Heart left ventricle (tissue), 16 donors: ENCODE measurements at regions of chr6 and their contacts with region 1.

Region 1: GRCh38 chr6:129331450-129332138 is 378.4 kb downstream of the ARHGAP18 start:
- DNase-seq: no peak
- ATAC-seq: no peak
- H3K4me3 ChIP-seq: no peak overlapping the region
- H3K27ac ChIP-seq: no peak overlapping the region
- H3K4me1 ChIP-seq: peaks cover 0 to 6% (median 0%) of the 10 kb centered on the region in 12 donors
- H3K27me3 ChIP-seq: no peaks in the 10 kb centered on the region
- CTCF ChIP-seq: no peak
- POLR2A ChIP-seq: no peak

Region 2: DNA sequence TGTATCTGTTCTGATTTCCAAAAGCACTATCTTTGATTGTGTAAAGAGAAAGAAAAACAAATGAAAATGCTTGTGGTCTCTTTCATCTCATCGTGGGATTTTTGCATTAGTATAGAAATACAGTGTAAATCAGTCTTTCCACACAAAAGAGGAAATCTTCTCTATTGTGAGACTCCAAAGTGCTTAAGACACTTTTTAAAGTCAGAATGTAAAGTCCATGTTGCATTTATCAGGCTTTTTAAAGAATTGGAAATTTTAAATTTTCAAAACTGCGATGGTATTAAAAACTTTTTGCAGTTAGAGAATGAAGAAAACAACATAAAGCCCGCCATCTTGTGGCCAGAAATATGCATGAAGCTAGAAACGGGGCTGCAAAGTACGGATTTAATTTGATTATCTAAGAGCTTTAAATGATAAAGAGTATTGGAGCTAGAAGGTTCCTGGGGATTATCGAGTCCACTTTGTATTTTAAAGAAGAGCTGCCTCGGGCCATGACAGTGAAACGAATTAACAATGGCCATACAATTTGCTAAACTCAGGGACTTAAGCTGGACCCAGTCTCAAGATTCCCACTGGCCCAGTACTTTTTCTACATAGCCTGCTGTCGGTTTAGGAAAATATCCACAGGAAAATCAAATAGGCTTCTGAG is 38.8 kb after region 1 on chr6:
- intact Hi-C with region 1: loop called in 1 of 10 experiments (anchors 5 kb)
- DNase-seq: peak in 1 of 5 donors; percentile 20
- ATAC-seq: no peak
- H3K4me3 ChIP-seq: peak overlapping the region in 3 of 12 donors; percentile 1 to 30 (median 13)
- H3K27ac ChIP-seq: peak overlapping the region in 11 of 12 donors; percentile 19 to 81 (median 59)
- H3K4me1 ChIP-seq: peaks cover 0 to 28% (median 6%) of the 10 kb centered on the region in 12 donors
- H3K27me3 ChIP-seq: no peaks in the 10 kb centered on the region
- CTCF ChIP-seq: peak; percentile 53 to 73 (median 66)
- POLR2A ChIP-seq: no peak

Region 3: GRCh38 chr6:129469070-129469662 is 137.6 kb after region 1 on chr6:
- intact Hi-C with region 1: loop called in 1 of 10 experiments (anchors 10 kb)
- DNase-seq: no peak
- ATAC-seq: peak in 1 of 4 donors; percentile 32
- H3K4me3 ChIP-seq: no peak overlapping the region
- H3K27ac ChIP-seq: no peak overlapping the region
- H3K4me1 ChIP-seq: peaks cover 0 to 5% (median 0%) of the 10 kb centered on the region in 12 donors
- H3K27me3 ChIP-seq: no peaks in the 10 kb centered on the region
- CTCF ChIP-seq: no peak
- POLR2A ChIP-seq: no peak

Region 4: GRCh38 chr6:129969064-129969463 is 637.5 kb after region 1 on chr6:
- intact Hi-C with region 1: no loop called
- DNase-seq: no peak
- ATAC-seq: no peak
- H3K4me3 ChIP-seq: no peak overlapping the region
- H3K27ac ChIP-seq: no peak overlapping the region
- H3K4me1 ChIP-seq: no peaks in the 10 kb centered on the region
- H3K27me3 ChIP-seq: peaks cover 0 to 7% (median 0%) of the 10 kb centered on the region in 9 donors
- CTCF ChIP-seq: no peak
- POLR2A ChIP-seq: no peak